BJ (cell line): ENCODE measurements at regions of chr9 and their contacts with region 1.

Region 1: GRCh38 chr9:86202338-86202882 is 57.0 kb downstream of the C9orf153 start:
- DNase-seq: no peak
- H3K4me3 ChIP-seq: no peak overlapping the region
- H3K27me3 ChIP-seq: peaks cover 1% of the 10 kb centered on the region; the same call in 1 of the 2 replicates
- CTCF ChIP-seq: peak; percentile 79

Region 2: GRCh38 chr9:86217076-86217755 is 14.8 kb after region 1 on chr9:
- CTCF ChIA-PET with region 1: interaction called, 30 read pairs
- POLR2A ChIA-PET with region 1: no interaction called
- DNase-seq: no peak
- H3K4me3 ChIP-seq: no peak overlapping the region
- H3K27me3 ChIP-seq: no peaks in the 10 kb centered on the region
- CTCF ChIP-seq: no peak

Region 3: GRCh38 chr9:86230858-86231257 is 28.4 kb after region 1 on chr9:
- CTCF ChIA-PET with region 1: interaction called, 12 read pairs
- POLR2A ChIA-PET with region 1: no interaction called
- DNase-seq: no peak
- H3K4me3 ChIP-seq: no peak overlapping the region
- H3K27me3 ChIP-seq: no peaks in the 10 kb centered on the region
- CTCF ChIP-seq: no peak

Region 4: DNA sequence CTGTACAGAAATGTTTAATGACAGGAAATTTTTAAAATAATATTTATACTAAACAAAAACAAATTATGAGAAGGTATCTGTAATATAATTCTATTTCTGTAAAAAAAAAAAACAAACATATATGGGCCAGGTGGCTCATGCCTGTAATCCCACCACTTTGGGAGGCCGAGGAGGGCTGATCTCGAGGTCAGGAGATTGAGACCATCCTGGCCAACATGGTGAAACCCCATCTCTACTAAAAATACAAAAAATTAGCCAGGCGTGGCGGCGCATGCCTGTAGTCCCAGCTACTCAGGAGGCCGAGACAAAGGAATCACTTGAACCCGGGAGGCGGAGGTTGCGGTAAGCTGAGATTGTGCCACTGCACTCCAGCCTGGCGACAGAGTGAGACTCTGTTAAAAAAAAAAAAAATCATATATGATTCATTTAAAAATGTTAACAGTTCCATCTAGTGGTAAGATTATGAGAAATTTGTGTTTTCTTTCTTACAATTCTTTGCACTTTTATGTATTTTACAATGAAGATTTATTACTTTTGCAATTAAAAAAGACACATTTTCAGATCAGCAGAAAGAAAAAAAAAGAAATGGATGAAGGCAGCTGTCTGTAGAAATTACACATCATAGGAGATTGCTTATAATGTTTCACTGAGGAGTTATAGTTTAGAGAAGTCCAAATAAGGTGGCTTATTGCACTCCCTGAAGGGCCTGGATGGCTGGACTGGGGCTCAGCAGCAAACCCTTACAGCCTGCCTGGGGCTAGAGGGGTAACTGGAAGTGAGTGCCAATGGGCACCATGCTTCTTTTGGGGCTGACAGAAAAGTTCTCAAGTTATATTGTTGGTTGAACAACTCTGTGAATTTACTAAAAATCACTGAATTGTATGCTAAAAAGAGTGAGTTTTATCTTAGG is 36.7 kb after region 1 on chr9:
- CTCF ChIA-PET with region 1: interaction called, 11 read pairs
- POLR2A ChIA-PET with region 1: no interaction called
- DNase-seq: no peak
- H3K4me3 ChIP-seq: no peak overlapping the region
- H3K27me3 ChIP-seq: no peaks in the 10 kb centered on the region
- CTCF ChIP-seq: no peak

Region 5: DNA sequence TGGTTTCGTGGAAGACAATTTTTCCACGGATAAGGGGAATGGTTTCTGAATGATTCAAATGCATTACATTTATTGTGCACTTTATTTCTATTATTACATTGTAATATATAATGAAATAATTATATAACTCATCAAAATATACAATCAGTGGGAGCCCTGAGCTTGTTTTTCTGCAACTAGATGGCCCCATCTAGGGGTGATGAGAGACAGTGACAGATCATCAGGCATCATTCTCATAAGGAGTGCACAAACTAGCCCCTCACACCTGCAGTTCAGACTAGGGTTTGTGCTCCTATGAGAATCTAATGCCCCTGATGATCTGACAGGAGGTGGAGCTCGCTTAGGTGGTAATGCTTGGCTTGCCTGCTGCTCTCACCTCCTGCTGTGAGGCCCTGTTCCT is 73.6 kb after region 1 on chr9:
- CTCF ChIA-PET with region 1: interaction called, 18 read pairs
- POLR2A ChIA-PET with region 1: no interaction called
- DNase-seq: no peak
- H3K4me3 ChIP-seq: no peak overlapping the region
- H3K27me3 ChIP-seq: no peaks in the 10 kb centered on the region
- CTCF ChIP-seq: no peak

Region 6: GRCh38 chr9:86508208-86508903 is 305.9 kb after region 1 on chr9:
- CTCF ChIA-PET with region 1: no interaction called
- POLR2A ChIA-PET with region 1: no interaction called
- DNase-seq: no peak
- H3K4me3 ChIP-seq: no peak overlapping the region
- H3K27me3 ChIP-seq: no peaks in the 10 kb centered on the region
- CTCF ChIP-seq: no peak